ENCODE measurements at regions of chr1 and their contacts with region 1.

Region 1: GRCh38 chr1:2255420-2256369 is 27.6 kb downstream of the SKI start:
- DNase-seq: peak; percentile 59 to 97 (median 75)
- ATAC-seq: peak; percentile 66
- H3K4me3 ChIP-seq: no peak overlapping the region
- H3K4me3 Mint-ChIP-seq: no peak overlapping the region
- H3K27ac ChIP-seq: peak overlapping the region; percentile 97 to 100
- H3K27ac Mint-ChIP-seq: no peak overlapping the region
- H3K4me1 ChIP-seq: peaks cover 86% of the 10 kb centered on the region
- H3K4me1 Mint-ChIP-seq: peaks cover 54% of the 10 kb centered on the region
- H3K27me3 ChIP-seq: no peaks in the 10 kb centered on the region
- H3K27me3 Mint-ChIP-seq: no peaks in the 10 kb centered on the region
- CTCF ChIP-seq: no peak

Region 2: DNA sequence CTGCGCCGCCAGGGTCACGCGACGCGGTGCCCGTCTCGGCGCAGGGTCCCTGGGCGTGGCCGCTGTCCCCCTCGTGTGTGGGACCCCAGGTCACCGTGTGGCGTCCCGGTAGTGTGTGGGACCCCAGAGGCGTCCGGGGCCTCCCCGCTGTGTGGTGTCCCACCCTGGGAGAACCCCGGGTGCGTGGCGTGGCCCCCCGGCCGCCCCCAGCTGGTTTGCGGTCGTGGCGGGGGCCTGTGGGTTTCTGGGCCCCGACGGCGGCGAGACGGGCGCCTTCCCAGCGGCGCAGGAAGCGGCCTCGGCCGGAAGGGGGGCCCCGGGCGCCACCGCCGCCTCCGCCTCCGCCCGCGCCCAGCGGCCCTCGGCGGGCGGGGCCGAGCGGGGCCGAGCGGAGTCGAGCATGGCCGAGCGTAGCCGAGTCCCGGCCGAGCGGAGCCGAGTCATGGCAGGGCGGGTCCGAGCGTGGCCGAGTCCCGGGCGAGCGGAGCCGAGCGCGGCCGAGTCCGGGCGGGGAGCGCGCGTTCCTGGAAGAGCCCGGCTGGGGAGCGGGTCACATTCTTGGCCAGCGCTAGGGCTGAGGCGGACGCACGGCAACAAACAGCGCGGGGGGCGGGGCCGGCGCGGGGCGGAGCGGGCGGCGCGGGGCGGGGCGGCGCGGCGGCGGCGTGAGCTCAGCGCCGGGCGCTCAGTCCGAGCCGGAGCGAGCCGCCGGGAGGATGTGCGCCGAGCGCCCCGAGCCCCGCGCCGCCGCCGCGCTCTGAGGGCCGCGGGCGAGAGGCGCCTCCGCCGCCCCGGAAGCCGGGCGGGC is 28.1 kb before region 1 on chr1:
- CTCF ChIA-PET with region 1: interaction called, 5 read pairs
- POLR2A ChIA-PET with region 1: interaction called, 78 read pairs
- intact Hi-C with region 1: loop called (anchors 1 kb)
- DNase-seq: peak; percentile 88 to 97 (median 91)
- ATAC-seq: peak; percentile 70
- H3K4me3 ChIP-seq: peak overlapping the region in 1 of 2 experiments; percentile 24
- H3K4me3 Mint-ChIP-seq: peak overlapping the region; percentile 68
- H3K27ac ChIP-seq: peak overlapping the region in 1 of 2 experiments; percentile 66
- H3K27ac Mint-ChIP-seq: peak overlapping the region; percentile 74
- H3K4me1 ChIP-seq: peaks cover 24% of the 10 kb centered on the region
- H3K4me1 Mint-ChIP-seq: peaks cover 21% of the 10 kb centered on the region
- H3K27me3 ChIP-seq: no peaks in the 10 kb centered on the region
- H3K27me3 Mint-ChIP-seq: no peaks in the 10 kb centered on the region
- CTCF ChIP-seq: no peak

Region 3: GRCh38 chr1:2240270-2241156 is 15.2 kb before region 1 on chr1:
- CTCF ChIA-PET with region 1: interaction called, 3 read pairs
- POLR2A ChIA-PET with region 1: interaction called, 78 read pairs
- intact Hi-C with region 1: loop called (anchors 1 to 2 kb)
- DNase-seq: peak in 4 of 9 experiments; percentile 28 to 69 (median 55)
- ATAC-seq: peak; percentile 11
- H3K4me3 ChIP-seq: no peak overlapping the region
- H3K4me3 Mint-ChIP-seq: peak overlapping the region; percentile 67
- H3K27ac ChIP-seq: no peak overlapping the region
- H3K27ac Mint-ChIP-seq: peak overlapping the region; percentile 82
- H3K4me1 ChIP-seq: peaks cover 93% of the 10 kb centered on the region
- H3K4me1 Mint-ChIP-seq: peaks cover 82% of the 10 kb centered on the region
- H3K27me3 ChIP-seq: no peaks in the 10 kb centered on the region
- H3K27me3 Mint-ChIP-seq: no peaks in the 10 kb centered on the region
- CTCF ChIP-seq: no peak

Region 4: GRCh38 chr1:2300851-2301606 is 45.3 kb after region 1 on chr1:
- CTCF ChIA-PET with region 1: interaction called, 3 read pairs
- POLR2A ChIA-PET with region 1: interaction called, 20 read pairs
- intact Hi-C with region 1: loop called (anchors 1 kb)
- DNase-seq: peak; percentile 86 to 99 (median 94)
- ATAC-seq: peak; percentile 75
- H3K4me3 ChIP-seq: peak overlapping the region; percentile 62 to 65
- H3K4me3 Mint-ChIP-seq: peak overlapping the region; percentile 82
- H3K27ac ChIP-seq: peak overlapping the region; percentile 99 to 100
- H3K27ac Mint-ChIP-seq: peak overlapping the region; percentile 98
- H3K4me1 ChIP-seq: peaks cover 62% of the 10 kb centered on the region
- H3K4me1 Mint-ChIP-seq: peaks cover 57% of the 10 kb centered on the region
- H3K27me3 ChIP-seq: no peaks in the 10 kb centered on the region
- H3K27me3 Mint-ChIP-seq: no peaks in the 10 kb centered on the region
- CTCF ChIP-seq: no peak

Region 5: DNA sequence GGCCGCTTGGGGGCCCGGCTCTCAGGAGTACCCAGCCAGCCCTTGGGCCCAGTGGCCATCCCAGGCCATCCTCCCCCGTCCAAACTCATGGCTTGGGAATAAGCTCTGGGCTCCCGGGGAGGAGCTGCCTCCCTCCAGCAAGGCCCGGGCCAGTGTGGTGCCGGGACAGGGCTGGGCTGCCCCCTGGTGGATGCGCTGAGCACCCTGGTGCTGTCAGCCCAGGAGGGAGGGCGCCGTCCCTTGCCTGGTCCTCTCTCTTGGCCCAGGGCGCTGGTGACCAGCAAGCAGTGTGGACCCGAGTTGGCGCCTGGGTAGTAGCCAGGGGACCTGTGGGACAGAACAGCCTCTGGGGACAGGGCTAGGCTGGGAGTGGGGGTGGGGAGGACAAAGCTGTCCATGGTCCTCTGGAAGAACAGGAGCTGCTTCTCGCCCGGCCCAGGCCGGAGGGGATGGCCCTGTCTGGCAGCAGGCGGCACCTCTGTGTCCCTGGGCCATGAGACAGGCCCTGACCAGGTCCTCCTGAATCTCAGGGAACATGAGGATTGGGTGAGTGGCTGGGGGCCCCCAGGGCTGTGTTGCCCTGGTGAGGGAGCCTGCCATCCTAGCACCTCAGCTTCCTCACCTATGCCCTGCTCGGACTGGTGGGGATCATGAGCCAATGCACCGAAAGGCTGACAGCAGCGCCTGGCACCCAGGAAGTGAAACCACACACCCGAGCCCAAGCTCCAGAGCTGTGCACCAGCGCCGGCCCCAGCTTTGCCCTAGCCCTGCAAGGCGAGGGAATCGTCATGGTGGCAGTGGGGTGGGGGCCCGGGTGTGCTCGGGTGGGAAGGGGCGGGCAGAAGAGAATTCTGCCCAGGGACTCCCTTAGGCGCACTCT is 126.3 kb after region 1 on chr1:
- CTCF ChIA-PET with region 1: interaction called, 5 read pairs
- POLR2A ChIA-PET with region 1: no interaction called
- intact Hi-C with region 1: loop called in 1 of 2 experiments (anchors 2 kb)
- DNase-seq: peak; percentile 59 to 87 (median 78)
- ATAC-seq: peak; percentile 97
- H3K4me3 ChIP-seq: no peak overlapping the region
- H3K4me3 Mint-ChIP-seq: no peak overlapping the region
- H3K27ac ChIP-seq: no peak overlapping the region
- H3K27ac Mint-ChIP-seq: no peak overlapping the region
- H3K4me1 ChIP-seq: peaks cover 15% of the 10 kb centered on the region
- H3K4me1 Mint-ChIP-seq: peaks cover 3% of the 10 kb centered on the region
- H3K27me3 ChIP-seq: no peaks in the 10 kb centered on the region
- H3K27me3 Mint-ChIP-seq: no peaks in the 10 kb centered on the region
- CTCF ChIP-seq: peak; percentile 71